Ovary (tissue), 10 donors: ENCODE measurements at regions of chr18 and their contacts with region 1.

Region 1: DNA sequence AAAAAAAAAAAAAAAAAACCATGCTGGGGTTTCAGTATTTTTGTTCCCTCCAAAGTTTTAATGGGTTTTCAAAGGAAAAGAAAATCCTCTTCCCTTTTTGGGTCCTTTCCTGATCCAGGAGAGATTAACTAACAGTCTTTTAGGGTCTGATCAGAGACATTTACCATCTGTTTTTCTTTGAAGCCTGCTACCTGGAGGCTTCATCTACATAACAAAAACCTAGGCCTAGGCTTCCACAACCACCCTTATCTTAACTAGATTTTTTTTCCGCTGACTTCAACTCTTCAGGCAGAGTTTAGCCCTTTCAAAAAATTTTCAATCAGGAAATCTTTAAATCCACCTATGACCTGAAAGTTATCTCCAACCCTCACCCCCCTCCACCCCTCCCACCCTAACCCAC is 154.7 kb downstream of the MBD2 start:
- DNase-seq: no peak
- H3K4me3 ChIP-seq: no peak overlapping the region
- H3K27ac ChIP-seq: no peak overlapping the region
- H3K4me1 ChIP-seq: no peaks in the 10 kb centered on the region
- H3K27me3 ChIP-seq: no peaks in the 10 kb centered on the region
- CTCF ChIP-seq: no peak
- EP300 ChIP-seq: no peak
- POLR2A ChIP-seq: no peak

Region 2: GRCh38 chr18:54109131-54109683 is 39.5 kb after region 1 on chr18:
- intact Hi-C with region 1: no loop called
- DNase-seq: no peak
- H3K4me3 ChIP-seq: no peak overlapping the region
- H3K27ac ChIP-seq: no peak overlapping the region
- H3K4me1 ChIP-seq: no peaks in the 10 kb centered on the region
- H3K27me3 ChIP-seq: no peaks in the 10 kb centered on the region
- CTCF ChIP-seq: no peak
- EP300 ChIP-seq: no peak
- POLR2A ChIP-seq: no peak

Region 3: GRCh38 chr18:54119524-54120019 is 49.8 kb after region 1 on chr18:
- intact Hi-C with region 1: loop called in 1 of 4 experiments (anchors 10 kb)
- DNase-seq: no peak
- H3K4me3 ChIP-seq: no peak overlapping the region
- H3K27ac ChIP-seq: no peak overlapping the region
- H3K4me1 ChIP-seq: peaks cover 2% of the 10 kb centered on the region
- H3K27me3 ChIP-seq: no peaks in the 10 kb centered on the region
- CTCF ChIP-seq: peak in 2 of 3 donors; percentile 20 to 25
- EP300 ChIP-seq: no peak
- POLR2A ChIP-seq: no peak

Region 4: GRCh38 chr18:54161267-54161666 is 91.5 kb after region 1 on chr18:
- intact Hi-C with region 1: no loop called
- DNase-seq: no peak
- H3K4me3 ChIP-seq: no peak overlapping the region
- H3K27ac ChIP-seq: no peak overlapping the region
- H3K4me1 ChIP-seq: no peaks in the 10 kb centered on the region
- H3K27me3 ChIP-seq: no peaks in the 10 kb centered on the region
- CTCF ChIP-seq: no peak
- EP300 ChIP-seq: no peak
- POLR2A ChIP-seq: no peak